CD4-positive, alpha-beta memory T cell (primary cell): ENCODE measurements at regions of chr17 and their contacts with region 1.

Region 1: DNA sequence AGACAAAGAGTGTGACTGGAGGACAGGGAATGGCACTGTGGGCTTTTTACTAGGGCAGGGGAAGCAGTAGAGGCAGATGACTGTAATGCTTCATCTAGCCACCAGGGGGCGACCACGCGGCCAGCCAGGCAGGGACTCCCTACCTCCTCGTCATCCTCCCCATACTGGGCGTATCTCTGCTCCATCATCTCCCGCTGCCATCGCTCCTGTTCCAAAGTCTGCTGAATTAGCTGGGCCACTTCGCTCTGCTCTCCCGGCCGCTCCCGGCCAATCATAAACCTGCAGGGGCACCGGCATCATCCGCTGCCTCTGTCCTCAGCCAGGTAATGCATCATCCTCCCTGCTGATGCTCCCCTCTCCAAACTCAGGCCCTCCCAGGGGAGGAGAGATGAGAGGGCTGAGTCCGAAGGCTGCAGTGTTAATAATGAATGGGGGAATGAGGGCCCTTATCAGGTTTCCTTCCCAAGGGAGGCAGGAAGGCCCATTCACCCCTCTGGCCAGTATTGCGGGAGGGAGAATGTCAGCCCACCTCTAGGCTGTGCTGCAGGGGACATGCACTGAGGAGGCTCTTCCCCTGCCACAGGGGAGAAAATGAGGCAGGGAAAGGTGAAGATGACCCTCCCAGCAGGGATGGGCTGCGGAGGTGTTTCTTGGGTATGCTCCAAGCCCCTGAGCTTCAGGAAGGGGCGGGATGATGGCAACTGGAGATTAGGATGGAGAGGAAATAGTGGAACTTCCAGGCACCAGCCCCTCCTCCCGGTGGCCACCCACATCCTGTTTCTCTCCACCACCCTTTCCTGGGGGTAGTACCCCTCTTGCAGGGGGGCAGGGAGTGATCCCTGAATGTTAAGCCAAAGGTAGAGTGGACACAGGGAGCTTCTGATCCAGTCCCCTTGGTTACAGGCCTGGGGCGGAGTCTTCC is 10.3 kb upstream of the SAMD14 start:
- DNase-seq: peak; percentile 77 to 80 (median 78)
- H3K4me3 ChIP-seq: peak overlapping the region; percentile 8 to 38
- H3K4me3 Mint-ChIP-seq: peak overlapping the region; percentile 68 to 99 (median 79)
- H3K27ac ChIP-seq: peak overlapping the region; percentile 68
- H3K27ac Mint-ChIP-seq: peak overlapping the region; percentile 85 to 92 (median 91)
- H3K4me1 ChIP-seq: peaks cover 72% of the 10 kb centered on the region
- H3K4me1 Mint-ChIP-seq: peaks cover 48 to 84% (median 65%) of the 10 kb centered on the region in 4 donors
- H3K27me3 ChIP-seq: no peaks in the 10 kb centered on the region
- H3K27me3 Mint-ChIP-seq: no peaks in the 10 kb centered on the region

Region 2: GRCh38 chr17:49980703-49981197 is 159.5 kb before region 1 on chr17:
- CTCF ChIA-PET with region 1: no interaction called
- POLR2A ChIA-PET with region 1: no interaction called
- intact Hi-C with region 1: no loop called
- DNase-seq: no peak
- H3K4me3 ChIP-seq: no peak overlapping the region
- H3K4me3 Mint-ChIP-seq: no peak overlapping the region
- H3K27ac ChIP-seq: no peak overlapping the region
- H3K27ac Mint-ChIP-seq: no peak overlapping the region
- H3K4me1 ChIP-seq: no peaks in the 10 kb centered on the region
- H3K4me1 Mint-ChIP-seq: no peaks in the 10 kb centered on the region
- H3K27me3 ChIP-seq: no peaks in the 10 kb centered on the region
- H3K27me3 Mint-ChIP-seq: peaks cover 21 to 39% of the 10 kb centered on the region in 2 donors

Region 3: GRCh38 chr17:50055426-50056230 is 84.6 kb before region 1 on chr17 and contains the start of gene ITGA3:
- CTCF ChIA-PET with region 1: no interaction called
- POLR2A ChIA-PET with region 1: no interaction called
- intact Hi-C with region 1: no loop called
- DNase-seq: peak; percentile 46 to 77 (median 49)
- H3K4me3 ChIP-seq: peak within 1 kb of the TSS; percentile 74 to 87
- H3K4me3 Mint-ChIP-seq: peak within 1 kb of the TSS; percentile 91 to 99 (median 94)
- H3K27ac ChIP-seq: peak within 1 kb of the TSS; percentile 60
- H3K27ac Mint-ChIP-seq: peak within 1 kb of the TSS; percentile 85 to 93 (median 88)
- H3K4me1 ChIP-seq: peaks cover 12% of the 10 kb centered on the region
- H3K4me1 Mint-ChIP-seq: peaks cover 13 to 50% (median 27%) of the 10 kb centered on the region in 4 donors
- H3K27me3 ChIP-seq: no peaks in the 10 kb centered on the region
- H3K27me3 Mint-ChIP-seq: no peaks in the 10 kb centered on the region
- total RNA-seq, gene ITGA3: 13.9 to 16.3 TPM

Region 4: GRCh38 chr17:50114849-50115357 is 25.3 kb before region 1 on chr17:
- CTCF ChIA-PET with region 1: interaction called, 28 read pairs
- POLR2A ChIA-PET with region 1: interaction called, 4 read pairs
- intact Hi-C with region 1: no loop called
- DNase-seq: peak in 4 of 5 donors; percentile 30 to 50 (median 42)
- H3K4me3 ChIP-seq: no peak overlapping the region
- H3K4me3 Mint-ChIP-seq: no peak overlapping the region
- H3K27ac ChIP-seq: no peak overlapping the region
- H3K27ac Mint-ChIP-seq: peak overlapping the region in 1 of 7 donors; percentile 45
- H3K4me1 ChIP-seq: peaks cover 13% of the 10 kb centered on the region
- H3K4me1 Mint-ChIP-seq: peaks cover 7 to 16% (median 12%) of the 10 kb centered on the region in 4 donors
- H3K27me3 ChIP-seq: peaks cover 7% of the 10 kb centered on the region
- H3K27me3 Mint-ChIP-seq: peaks cover 14 to 20% of the 10 kb centered on the region in 2 donors

Region 5: GRCh38 chr17:50151041-50151936 is 11.1 kb after region 1 on chr17:
- CTCF ChIA-PET with region 1: interaction called, 72 read pairs
- POLR2A ChIA-PET with region 1: interaction called, 75 read pairs
- intact Hi-C with region 1: loop called (anchors 1 kb)
- DNase-seq: peak; percentile 82 to 91 (median 84)
- H3K4me3 ChIP-seq: peak overlapping the region; percentile 76 to 93
- H3K4me3 Mint-ChIP-seq: peak overlapping the region; percentile 85 to 94 (median 89)
- H3K27ac ChIP-seq: peak overlapping the region; percentile 79
- H3K27ac Mint-ChIP-seq: peak overlapping the region; percentile 86 to 98 (median 91)
- H3K4me1 ChIP-seq: peaks cover 50% of the 10 kb centered on the region
- H3K4me1 Mint-ChIP-seq: peaks cover 20 to 54% (median 37%) of the 10 kb centered on the region in 4 donors
- H3K27me3 ChIP-seq: no peaks in the 10 kb centered on the region
- H3K27me3 Mint-ChIP-seq: no peaks in the 10 kb centered on the region

Region 6: GRCh38 chr17:50169121-50169764 is 29.0 kb after region 1 on chr17:
- CTCF ChIA-PET with region 1: interaction called, 38 read pairs
- POLR2A ChIA-PET with region 1: interaction called, 5 read pairs
- intact Hi-C with region 1: no loop called
- DNase-seq: peak; percentile 71 to 81 (median 72)
- H3K4me3 ChIP-seq: peak overlapping the region in 1 of 2 donors; percentile 35
- H3K4me3 Mint-ChIP-seq: peak overlapping the region; percentile 25 to 87 (median 65)
- H3K27ac ChIP-seq: no peak overlapping the region
- H3K27ac Mint-ChIP-seq: peak overlapping the region; percentile 37 to 89 (median 81)
- H3K4me1 ChIP-seq: peaks cover 10% of the 10 kb centered on the region
- H3K4me1 Mint-ChIP-seq: peaks cover 10 to 19% (median 11%) of the 10 kb centered on the region in 4 donors
- H3K27me3 ChIP-seq: no peaks in the 10 kb centered on the region
- H3K27me3 Mint-ChIP-seq: peaks cover 2 to 3% of the 10 kb centered on the region in 2 donors

Region 7: GRCh38 chr17:50200457-50201275 is 60.5 kb after region 1 on chr17:
- CTCF ChIA-PET with region 1: interaction called, 6 read pairs
- POLR2A ChIA-PET with region 1: no interaction called
- intact Hi-C with region 1: loop called (anchors 2 kb)
- DNase-seq: peak; percentile 79 to 81 (median 80)
- H3K4me3 ChIP-seq: peak overlapping the region in 1 of 2 donors; percentile 50
- H3K4me3 Mint-ChIP-seq: peak overlapping the region; percentile 50 to 84 (median 75)
- H3K27ac ChIP-seq: peak overlapping the region; percentile 6
- H3K27ac Mint-ChIP-seq: peak overlapping the region; percentile 80 to 95 (median 91)
- H3K4me1 ChIP-seq: peaks cover 16% of the 10 kb centered on the region
- H3K4me1 Mint-ChIP-seq: peaks cover 8 to 39% (median 18%) of the 10 kb centered on the region in 4 donors
- H3K27me3 ChIP-seq: peaks cover 17% of the 10 kb centered on the region
- H3K27me3 Mint-ChIP-seq: peaks cover 33 to 60% of the 10 kb centered on the region in 2 donors

Region 8: GRCh38 chr17:50212121-50212843 is 72.1 kb after region 1 on chr17:
- CTCF ChIA-PET with region 1: no interaction called
- POLR2A ChIA-PET with region 1: no interaction called
- intact Hi-C with region 1: no loop called
- DNase-seq: no peak
- H3K4me3 ChIP-seq: no peak overlapping the region
- H3K4me3 Mint-ChIP-seq: no peak overlapping the region
- H3K27ac ChIP-seq: no peak overlapping the region
- H3K27ac Mint-ChIP-seq: peak overlapping the region in 2 of 7 donors; percentile 17 to 22
- H3K4me1 ChIP-seq: peaks cover 6% of the 10 kb centered on the region
- H3K4me1 Mint-ChIP-seq: peaks cover 0 to 22% (median 4%) of the 10 kb centered on the region in 4 donors
- H3K27me3 ChIP-seq: peaks cover 3% of the 10 kb centered on the region
- H3K27me3 Mint-ChIP-seq: peaks cover 20 to 34% of the 10 kb centered on the region in 2 donors